Activated CD8-positive, alpha-beta memory T cell treated with anti-CD3 and anti-CD28 coated beads, Interleukin-2, amount 10 ng/mL, durations not matched to agents 7 days and 5 days (primary cell): ENCODE measurements at regions of chr18 and their contacts with region 1.

Region 1: GRCh38 chr18:35231052-35231451 is 9.8 kb upstream of the ZNF397 start:
- DNase-seq: peak; percentile 86
- ATAC-seq: peak; percentile 78
- H3K4me3 Mint-ChIP-seq: peak overlapping the region; percentile 52
- H3K27ac Mint-ChIP-seq: peak overlapping the region; percentile 29
- H3K4me1 Mint-ChIP-seq: peaks cover 3% of the 10 kb centered on the region
- H3K27me3 Mint-ChIP-seq: peaks cover 2% of the 10 kb centered on the region

Region 2: DNA sequence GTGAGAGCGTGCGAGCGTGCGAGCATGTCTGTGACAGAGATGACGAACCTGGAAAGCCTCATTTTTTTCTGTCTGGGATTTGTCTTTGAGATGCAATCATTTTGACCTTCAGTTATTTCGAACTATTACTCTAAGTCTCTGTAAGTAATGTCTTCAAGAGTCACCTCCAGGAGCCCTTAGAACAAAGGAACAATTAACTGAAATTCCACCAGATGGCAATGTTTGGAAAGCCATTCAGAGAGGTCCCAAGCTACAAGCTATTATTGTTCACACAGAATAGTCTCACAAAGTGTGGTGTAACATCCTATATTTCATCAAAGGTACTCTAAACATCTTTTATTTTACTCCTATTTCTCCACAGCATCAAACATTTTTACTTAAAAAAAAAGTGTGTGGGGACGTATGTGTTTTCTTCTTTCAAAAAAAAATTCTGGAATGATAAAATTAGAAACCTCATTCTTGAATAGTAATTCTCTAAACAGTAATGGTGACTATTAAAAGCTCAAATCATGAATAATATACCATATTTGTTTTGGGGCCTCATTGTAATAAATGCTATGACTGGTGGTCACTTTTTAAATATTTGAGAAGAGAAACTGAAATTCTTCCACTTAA is 225.0 kb before region 1 on chr18:
- CTCF ChIA-PET with region 1: interaction called, 10 read pairs
- DNase-seq: no peak
- ATAC-seq: peak; percentile 65
- H3K4me3 Mint-ChIP-seq: no peak overlapping the region
- H3K27ac Mint-ChIP-seq: no peak overlapping the region
- H3K4me1 Mint-ChIP-seq: no peaks in the 10 kb centered on the region
- H3K27me3 Mint-ChIP-seq: no peaks in the 10 kb centered on the region

Region 3: GRCh38 chr18:35355140-35355618 is 124.1 kb after region 1 on chr18:
- CTCF ChIA-PET with region 1: interaction called, 37 read pairs
- DNase-seq: peak; percentile 67
- ATAC-seq: peak; percentile 76
- H3K4me3 Mint-ChIP-seq: no peak overlapping the region
- H3K27ac Mint-ChIP-seq: no peak overlapping the region
- H3K4me1 Mint-ChIP-seq: no peaks in the 10 kb centered on the region
- H3K27me3 Mint-ChIP-seq: no peaks in the 10 kb centered on the region

Region 4: GRCh38 chr18:35386600-35387351 is 155.7 kb after region 1 on chr18:
- CTCF ChIA-PET with region 1: interaction called, 20 read pairs
- DNase-seq: peak; percentile 77
- ATAC-seq: peak; percentile 87
- H3K4me3 Mint-ChIP-seq: no peak overlapping the region
- H3K27ac Mint-ChIP-seq: no peak overlapping the region
- H3K4me1 Mint-ChIP-seq: peaks cover 6% of the 10 kb centered on the region
- H3K27me3 Mint-ChIP-seq: peaks cover 39% of the 10 kb centered on the region